Endothelial cell of umbilical vein (primary cell): ENCODE measurements at regions of chr2 and their contacts with region 1.

Region 1: GRCh38 chr2:223957092-223957851 is at the start of gene MRPL44:
- DNase-seq: peak; percentile 95
- H3K4me3 ChIP-seq: peak within 1 kb of the TSS; percentile 89 to 99 (median 95)
- H3K27ac ChIP-seq: peak within 1 kb of the TSS; percentile 58
- H3K4me1 ChIP-seq: peaks cover 38% of the 10 kb centered on the region
- H3K27me3 ChIP-seq: no peaks in the 10 kb centered on the region
- CTCF ChIP-seq: no peak
- POLR2A ChIP-seq: peak; percentile 90
- total RNA-seq, gene MRPL44: 27.7 and 31.5 TPM in 2 replicates

Region 2: GRCh38 chr2:223918671-223919134 is 38.6 kb before region 1 on chr2:
- CTCF ChIA-PET with region 1: interaction called, 4 read pairs
- POLR2A ChIA-PET with region 1: no interaction called
- dilution Hi-C with region 1: no loop called
- intact Hi-C with region 1: loop called (anchors 1 kb)
- DNase-seq: peak; percentile 82
- H3K4me3 ChIP-seq: no peak overlapping the region
- H3K27ac ChIP-seq: peak overlapping the region; percentile 67
- H3K4me1 ChIP-seq: peaks cover 55% of the 10 kb centered on the region
- H3K27me3 ChIP-seq: no peaks in the 10 kb centered on the region
- CTCF ChIP-seq: no peak
- POLR2A ChIP-seq: no peak

Region 3: DNA sequence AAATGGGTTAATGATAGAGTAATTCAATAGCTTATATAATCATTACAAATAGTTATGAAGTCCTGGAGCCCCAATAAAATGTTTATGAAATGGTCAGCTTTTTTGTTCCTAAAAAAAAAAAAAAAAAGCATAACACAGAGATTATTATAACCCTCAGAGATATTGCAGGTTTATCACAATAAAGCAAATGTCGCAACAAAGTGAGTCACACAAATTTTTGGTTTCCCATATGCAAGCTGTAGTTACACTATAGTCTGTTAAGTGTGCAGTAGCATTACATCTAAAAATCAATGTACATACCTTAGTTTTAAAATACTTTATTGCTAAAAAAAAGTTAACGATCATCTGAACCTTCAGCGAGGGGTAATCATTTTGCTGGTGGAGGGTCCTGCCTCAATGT is 32.2 kb before region 1 on chr2:
- CTCF ChIA-PET with region 1: interaction called, 4 read pairs
- POLR2A ChIA-PET with region 1: no interaction called
- dilution Hi-C with region 1: no loop called
- intact Hi-C with region 1: loop called (anchors 1 kb)
- DNase-seq: no peak
- H3K4me3 ChIP-seq: no peak overlapping the region
- H3K27ac ChIP-seq: no peak overlapping the region
- H3K4me1 ChIP-seq: peaks cover 51% of the 10 kb centered on the region
- H3K27me3 ChIP-seq: no peaks in the 10 kb centered on the region
- CTCF ChIP-seq: no peak
- POLR2A ChIP-seq: no peak

Region 4: GRCh38 chr2:223993621-223994232 is 36.5 kb after region 1 on chr2:
- CTCF ChIA-PET with region 1: no interaction called
- POLR2A ChIA-PET with region 1: no interaction called
- dilution Hi-C with region 1: no loop called
- intact Hi-C with region 1: no loop called
- DNase-seq: peak; percentile 74
- H3K4me3 ChIP-seq: no peak overlapping the region
- H3K27ac ChIP-seq: no peak overlapping the region
- H3K4me1 ChIP-seq: no peaks in the 10 kb centered on the region
- H3K27me3 ChIP-seq: no peaks in the 10 kb centered on the region
- CTCF ChIP-seq: peak; percentile 69 to 75
- POLR2A ChIP-seq: no peak